Left cardiac atrium (tissue), 4 donors: ENCODE measurements at regions of chr15 and their contacts with region 1.

Region 1: GRCh38 chr15:62389885-62390790 is 225.1 kb upstream of the C2CD4B start:
- DNase-seq: peak; percentile 77
- ATAC-seq: peak; percentile 92 to 93

Region 2: DNA sequence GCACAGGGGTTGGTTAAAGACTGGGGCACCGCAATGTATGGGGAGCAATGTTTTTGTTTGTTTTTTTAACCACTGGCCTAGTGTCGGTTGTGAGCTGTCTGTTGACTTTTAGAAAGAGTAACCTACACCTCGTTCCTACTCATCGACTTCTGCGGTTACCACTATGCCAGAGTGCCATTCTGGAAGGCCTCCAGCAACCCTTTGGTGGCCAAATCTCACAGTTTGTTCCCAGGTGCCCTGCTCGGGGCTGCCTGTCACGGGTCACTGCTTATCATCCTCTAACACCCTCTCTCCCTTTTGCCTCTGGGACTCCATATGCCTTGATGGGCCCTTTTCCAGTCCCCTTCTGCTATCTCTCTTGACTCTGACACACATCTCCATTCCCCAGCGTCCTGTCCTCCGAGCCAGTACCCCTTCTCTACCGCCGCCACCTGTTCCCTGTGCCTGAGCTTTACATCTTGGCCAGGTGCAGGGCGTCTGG is 65.3 kb after region 1 on chr15:
- intact Hi-C with region 1: loop called in 1 of 2 experiments (anchors 5 kb)
- DNase-seq: peak; percentile 65
- ATAC-seq: peak; percentile 88 to 89

Region 3: DNA sequence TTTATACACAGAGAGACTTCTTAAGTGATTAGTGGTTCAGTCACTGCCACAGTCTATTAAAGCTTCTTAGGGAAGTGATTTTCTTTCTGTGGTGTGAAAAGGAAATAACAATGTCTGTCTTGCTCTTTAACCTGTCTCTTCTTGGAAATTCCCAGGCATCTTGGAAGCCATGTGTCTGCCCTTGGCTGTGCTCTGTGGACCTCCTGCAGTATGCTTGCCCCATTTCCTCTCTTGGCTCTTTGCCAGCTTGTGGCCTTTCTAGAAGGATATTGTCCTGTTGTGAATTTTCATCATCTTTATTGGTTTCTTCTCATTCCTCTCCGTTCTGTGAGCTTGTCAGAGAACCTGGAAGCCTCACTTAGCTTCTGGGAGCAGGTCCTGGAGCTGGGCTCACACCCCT is 113.3 kb after region 1 on chr15:
- intact Hi-C with region 1: loop called in 1 of 2 experiments (anchors 5 kb)
- DNase-seq: peak; percentile 47
- ATAC-seq: peak in 1 of 2 donors; percentile 16

Region 4: DNA sequence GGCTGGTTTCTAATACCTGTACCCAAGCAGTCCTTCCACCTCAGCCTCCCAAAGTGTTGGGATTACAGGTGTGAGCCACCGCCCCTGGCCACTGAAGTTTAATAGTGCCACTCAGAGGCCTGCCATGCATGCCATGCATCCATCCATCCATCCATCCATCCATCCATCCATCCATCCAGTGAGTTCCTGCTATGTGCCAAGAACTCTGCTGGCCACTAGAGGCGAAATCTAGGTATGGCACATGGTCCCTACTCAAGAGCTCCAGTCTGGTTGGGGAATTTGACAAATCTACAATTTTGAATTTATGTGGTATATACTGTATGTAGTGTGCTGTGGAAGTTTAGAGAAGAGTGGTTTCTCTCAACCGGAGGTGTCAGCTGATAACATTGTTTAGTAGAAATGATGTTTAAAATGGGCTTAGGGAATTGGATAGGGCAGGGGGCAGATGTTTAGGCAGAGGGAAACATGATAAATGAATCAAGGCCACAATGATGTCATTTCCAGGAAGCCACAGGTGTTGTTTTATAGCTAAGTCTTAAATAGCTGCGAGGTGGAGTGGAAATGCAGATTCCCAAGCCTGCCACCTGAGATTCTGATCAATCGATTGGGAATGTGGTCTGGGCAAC is 159.3 kb after region 1 on chr15:
- intact Hi-C with region 1: loop called in 1 of 2 experiments (anchors 10 kb)
- DNase-seq: no peak
- ATAC-seq: no peak

Region 5: GRCh38 chr15:62649793-62650420 is 259.8 kb after region 1 on chr15:
- intact Hi-C with region 1: loop called in 1 of 2 experiments (anchors 5 kb)
- DNase-seq: peak; percentile 57
- ATAC-seq: peak; percentile 50 to 79

Region 6: GRCh38 chr15:62665449-62665848 is 275.3 kb after region 1 on chr15:
- intact Hi-C with region 1: no loop called
- DNase-seq: no peak
- ATAC-seq: peak in 1 of 2 donors; percentile 44

Region 7: DNA sequence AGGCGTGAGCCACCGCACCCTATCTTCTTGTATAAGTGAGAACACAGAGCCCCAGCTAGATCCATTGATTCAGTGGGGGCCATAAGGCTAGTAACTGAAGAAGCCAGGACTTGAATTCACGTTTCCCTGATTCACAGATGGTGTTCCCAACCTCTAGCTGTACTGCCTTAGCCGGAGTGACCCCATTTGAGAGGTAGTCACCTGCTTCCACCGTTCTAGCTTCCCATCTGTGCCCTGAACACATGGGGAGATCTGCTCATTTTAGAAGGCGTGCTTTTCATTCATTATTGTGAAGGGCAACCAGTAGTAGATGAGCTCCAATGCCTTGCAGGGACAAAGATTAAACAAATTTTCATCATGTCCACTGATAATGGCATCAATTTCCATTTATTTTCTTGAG is 286.8 kb after region 1 on chr15:
- intact Hi-C with region 1: no loop called
- DNase-seq: no peak
- ATAC-seq: no peak

Region 8: GRCh38 chr15:62742409-62743171 is 352.5 kb after region 1 on chr15:
- intact Hi-C with region 1: loop called in 1 of 2 experiments (anchors 5 kb)
- DNase-seq: peak; percentile 66
- ATAC-seq: peak; percentile 69 to 90